CD14-positive monocyte (primary cell): ENCODE measurements at regions of chr6 and their contacts with region 1.

Region 1: DNA sequence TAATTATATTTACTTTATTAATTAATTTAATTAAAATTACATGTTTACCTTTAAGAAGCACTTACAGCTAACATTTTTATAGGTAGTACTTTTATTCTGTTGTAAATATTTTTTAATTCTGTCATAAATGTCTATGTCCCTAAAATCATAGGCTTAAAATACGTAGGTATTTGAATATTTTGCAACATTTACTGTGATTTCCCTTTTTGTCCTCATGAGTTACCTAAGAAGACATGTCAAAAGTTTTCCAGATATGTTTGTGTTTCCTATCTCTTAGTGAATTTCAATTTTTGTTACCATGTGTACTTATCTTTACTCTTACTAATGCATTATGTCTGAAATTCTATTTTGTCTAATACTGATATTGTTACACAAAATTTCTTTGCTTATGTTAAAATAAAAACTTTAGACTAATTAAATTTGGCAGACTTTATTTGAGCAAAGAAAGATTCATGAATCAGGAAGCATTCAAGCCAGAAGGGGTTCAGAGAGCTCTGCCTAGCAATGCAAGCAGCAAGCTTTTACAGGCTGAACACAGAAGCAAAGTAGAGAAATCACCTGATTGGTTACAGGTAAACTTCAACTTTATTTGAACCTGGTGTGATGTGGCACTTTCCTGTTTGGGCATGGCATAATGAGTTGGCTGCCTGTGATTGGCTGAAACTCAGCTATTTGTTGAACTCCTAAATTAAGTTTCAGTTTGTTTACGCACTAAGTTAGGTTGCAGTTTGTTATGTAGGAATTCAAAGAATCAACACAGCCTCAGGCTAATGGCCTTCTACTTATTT is 123.2 kb upstream of the TMEM170B start:
- DNase-seq: peak; percentile 23 to 71 (median 68)
- H3K4me3 ChIP-seq: no peak overlapping the region
- H3K4me3 Mint-ChIP-seq: no peak overlapping the region
- H3K27ac ChIP-seq: peak overlapping the region in 1 of 2 donors; percentile 55
- H3K27ac Mint-ChIP-seq: peak overlapping the region; percentile 66 to 86 (median 81)
- H3K4me1 ChIP-seq: peaks cover 14 to 21% of the 10 kb centered on the region in 2 donors
- H3K4me1 Mint-ChIP-seq: peaks cover 29% of the 10 kb centered on the region
- H3K27me3 ChIP-seq: no peaks in the 10 kb centered on the region
- H3K27me3 Mint-ChIP-seq: peaks cover 0 to 3% (median 2%) of the 10 kb centered on the region in 3 donors
- CTCF ChIP-seq: no peak

Region 2: GRCh38 chr6:11353921-11354389 is 60.4 kb before region 1 on chr6:
- intact Hi-C with region 1: loop called in 1 of 2 experiments (anchors 5 kb)
- DNase-seq: peak; percentile 38 to 79 (median 62)
- H3K4me3 ChIP-seq: no peak overlapping the region
- H3K4me3 Mint-ChIP-seq: no peak overlapping the region
- H3K27ac ChIP-seq: peak overlapping the region; percentile 4 to 11
- H3K27ac Mint-ChIP-seq: peak overlapping the region; percentile 71 to 92 (median 88)
- H3K4me1 ChIP-seq: peaks cover 70 to 93% of the 10 kb centered on the region in 2 donors
- H3K4me1 Mint-ChIP-seq: peaks cover 89% of the 10 kb centered on the region
- H3K27me3 ChIP-seq: no peaks in the 10 kb centered on the region
- H3K27me3 Mint-ChIP-seq: peaks cover 0 to 1% (median 0%) of the 10 kb centered on the region in 3 donors
- CTCF ChIP-seq: no peak

Region 3: DNA sequence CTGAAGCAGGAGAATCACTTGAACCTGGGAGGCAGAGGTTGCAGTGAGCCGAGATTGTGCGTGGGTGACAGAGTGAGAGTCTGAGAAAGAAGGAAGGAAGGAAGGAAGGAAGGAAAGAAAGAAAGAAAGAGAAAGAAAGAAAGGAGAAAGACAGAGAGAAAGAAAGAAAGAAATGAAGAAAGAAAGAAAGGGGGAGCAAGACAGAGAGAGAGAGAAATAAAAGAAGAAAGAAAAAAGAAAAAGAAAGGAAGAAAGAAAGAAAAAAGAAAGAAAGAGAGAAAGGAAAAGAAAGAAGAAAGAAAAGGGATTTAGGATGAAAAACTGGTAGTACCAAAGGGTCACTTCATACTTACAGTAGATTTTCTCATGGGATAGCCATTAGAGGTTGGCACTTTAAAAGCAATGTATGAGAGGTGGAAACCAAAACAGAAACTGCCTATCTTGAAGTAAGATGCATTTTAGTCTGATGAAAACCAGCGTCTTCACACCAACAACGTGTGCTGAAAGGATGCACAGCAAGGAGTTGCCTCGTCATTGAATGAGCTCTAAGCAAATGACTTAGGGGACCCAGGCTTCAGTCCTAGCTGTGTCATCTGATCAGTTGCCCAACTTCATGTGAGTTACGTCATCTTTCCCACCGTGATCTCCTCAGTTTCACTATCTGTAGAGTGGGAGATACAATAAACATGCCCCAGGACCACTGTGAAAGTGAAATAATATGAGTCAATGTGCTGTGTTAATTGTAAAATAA is 48.0 kb before region 1 on chr6:
- intact Hi-C with region 1: loop called in 1 of 2 experiments (anchors 5 kb)
- DNase-seq: peak; percentile 86 to 96 (median 92)
- H3K4me3 ChIP-seq: peak overlapping the region in 1 of 3 experiments; percentile 7
- H3K4me3 Mint-ChIP-seq: peak overlapping the region; percentile 26 to 39
- H3K27ac ChIP-seq: peak overlapping the region; percentile 1 to 72
- H3K27ac Mint-ChIP-seq: peak overlapping the region; percentile 88 to 92 (median 92)
- H3K4me1 ChIP-seq: peaks cover 56 to 57% of the 10 kb centered on the region in 2 donors
- H3K4me1 Mint-ChIP-seq: peaks cover 71% of the 10 kb centered on the region
- H3K27me3 ChIP-seq: no peaks in the 10 kb centered on the region
- H3K27me3 Mint-ChIP-seq: peaks cover 0 to 7% (median 2%) of the 10 kb centered on the region in 3 donors
- CTCF ChIP-seq: no peak

Region 4: GRCh38 chr6:11460001-11460668 is 45.8 kb after region 1 on chr6:
- intact Hi-C with region 1: loop called (anchors 5 to 10 kb)
- DNase-seq: peak; percentile 52 to 87 (median 68)
- H3K4me3 ChIP-seq: peak overlapping the region in 1 of 3 experiments; percentile 38
- H3K4me3 Mint-ChIP-seq: peak overlapping the region; percentile 5 to 76
- H3K27ac ChIP-seq: peak overlapping the region; percentile 2 to 74
- H3K27ac Mint-ChIP-seq: peak overlapping the region; percentile 83 to 95 (median 90)
- H3K4me1 ChIP-seq: peaks cover 54 to 59% of the 10 kb centered on the region in 2 donors
- H3K4me1 Mint-ChIP-seq: peaks cover 62% of the 10 kb centered on the region
- H3K27me3 ChIP-seq: no peaks in the 10 kb centered on the region
- H3K27me3 Mint-ChIP-seq: no peaks in the 10 kb centered on the region
- CTCF ChIP-seq: no peak

Region 5: DNA sequence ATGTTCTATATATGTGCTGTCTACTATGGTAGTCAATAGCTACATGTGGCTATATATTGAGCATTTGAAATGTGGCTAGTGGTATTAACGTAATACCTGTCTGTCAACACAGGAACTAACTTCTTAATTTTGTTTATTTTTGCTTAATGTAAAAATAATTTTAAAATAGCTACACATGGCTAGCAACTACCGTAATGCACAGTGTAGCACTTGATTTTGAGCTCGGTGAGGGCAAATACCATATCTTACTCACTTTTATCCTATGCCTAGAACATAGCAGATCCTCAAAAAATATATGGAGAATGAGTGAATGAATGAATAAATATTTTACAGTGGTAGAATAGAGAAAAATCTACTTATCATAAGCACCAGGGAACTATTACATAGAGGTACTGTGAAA is 95.1 kb after region 1 on chr6:
- intact Hi-C with region 1: no loop called
- DNase-seq: no peak
- H3K4me3 ChIP-seq: no peak overlapping the region
- H3K4me3 Mint-ChIP-seq: no peak overlapping the region
- H3K27ac ChIP-seq: no peak overlapping the region
- H3K27ac Mint-ChIP-seq: no peak overlapping the region
- H3K4me1 ChIP-seq: peaks cover 4 to 6% of the 10 kb centered on the region in 2 donors
- H3K4me1 Mint-ChIP-seq: peaks cover 12% of the 10 kb centered on the region
- H3K27me3 ChIP-seq: no peaks in the 10 kb centered on the region
- H3K27me3 Mint-ChIP-seq: peaks cover 0 to 2% (median 2%) of the 10 kb centered on the region in 3 donors
- CTCF ChIP-seq: no peak

Region 6: GRCh38 chr6:11712760-11713159 is 298.4 kb after region 1 on chr6:
- intact Hi-C with region 1: no loop called
- DNase-seq: peak; percentile 84 to 98 (median 93)
- H3K4me3 ChIP-seq: no peak overlapping the region
- H3K4me3 Mint-ChIP-seq: peak overlapping the region in 1 of 2 donors; percentile 75
- H3K27ac ChIP-seq: peak overlapping the region; percentile 53 to 77
- H3K27ac Mint-ChIP-seq: peak overlapping the region; percentile 87 to 97 (median 92)
- H3K4me1 ChIP-seq: peaks cover 25 to 30% of the 10 kb centered on the region in 2 donors
- H3K4me1 Mint-ChIP-seq: peaks cover 42% of the 10 kb centered on the region
- H3K27me3 ChIP-seq: no peaks in the 10 kb centered on the region
- H3K27me3 Mint-ChIP-seq: peaks cover 0 to 9% (median 0%) of the 10 kb centered on the region in 3 donors
- CTCF ChIP-seq: no peak